Activated CD4-positive, alpha-beta memory T cell treated with anti-CD3 and anti-CD28 coated beads for 36 hours (primary cell): ENCODE measurements at regions of chr4 and their contacts with region 1.

Region 1: GRCh38 chr4:152485726-152486276 is 50.1 kb downstream of the FBXW7 start:
- DNase-seq: no peak
- H3K4me3 Mint-ChIP-seq: peak overlapping the region; percentile 23
- H3K27ac Mint-ChIP-seq: no peak overlapping the region
- H3K4me1 Mint-ChIP-seq: peaks cover 39% of the 10 kb centered on the region
- H3K27me3 Mint-ChIP-seq: no peaks in the 10 kb centered on the region

Region 2: GRCh38 chr4:152454398-152455011 is 31.3 kb before region 1 on chr4:
- CTCF ChIA-PET with region 1: interaction called, 3 read pairs
- POLR2A ChIA-PET with region 1: no interaction called
- intact Hi-C with region 1: loop called (anchors 2 kb)
- DNase-seq: no peak
- H3K4me3 Mint-ChIP-seq: no peak overlapping the region
- H3K27ac Mint-ChIP-seq: no peak overlapping the region
- H3K4me1 Mint-ChIP-seq: peaks cover 33% of the 10 kb centered on the region
- H3K27me3 Mint-ChIP-seq: no peaks in the 10 kb centered on the region